ENCODE measurements at regions of chr7 and their contacts with region 1.

Region 1: GRCh38 chr7:129356176-129356575 is 78.1 kb upstream of the STRIP2 start:
- DNase-seq: no peak
- H3K4me3 ChIP-seq: no peak overlapping the region
- H3K27ac ChIP-seq: no peak overlapping the region
- H3K4me1 ChIP-seq: peaks cover 0 to 29% (median 9%) of the 10 kb centered on the region in 4 donors
- H3K27me3 ChIP-seq: no peaks in the 10 kb centered on the region
- CTCF ChIP-seq: no peak
- EP300 ChIP-seq: no peak
- POLR2A ChIP-seq: no peak

Region 2: DNA sequence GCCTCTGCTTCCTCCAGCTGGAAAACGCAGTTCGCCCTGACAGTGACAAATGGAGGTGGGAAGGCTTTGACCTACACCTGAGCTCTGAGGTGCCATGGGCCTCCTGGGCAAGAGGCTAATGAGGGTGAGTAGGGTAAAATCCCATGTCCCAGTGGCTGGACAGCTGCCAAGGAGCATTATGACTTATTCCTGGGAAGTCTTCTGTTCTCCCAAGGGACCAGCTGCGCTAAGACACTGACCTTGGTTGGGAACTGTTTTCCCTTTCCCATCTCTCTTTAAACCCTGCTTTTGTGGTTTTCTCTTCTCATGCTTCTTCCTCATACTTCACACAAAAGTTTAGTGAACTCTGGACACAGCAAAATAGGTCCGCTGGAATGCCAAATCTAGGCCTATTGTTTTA is 1239.8 kb after region 1 on chr7:
- in situ Hi-C with region 1: no loop called
- intact Hi-C with region 1: loop called (anchors 5 kb)
- DNase-seq: no peak
- H3K4me3 ChIP-seq: no peak overlapping the region
- H3K27ac ChIP-seq: no peak overlapping the region
- H3K4me1 ChIP-seq: no peaks in the 10 kb centered on the region
- H3K27me3 ChIP-seq: no peaks in the 10 kb centered on the region
- CTCF ChIP-seq: no peak
- EP300 ChIP-seq: no peak
- POLR2A ChIP-seq: no peak